PC-9 (cell line): ENCODE measurements at regions of chr3 and their contacts with region 1.

Region 1: DNA sequence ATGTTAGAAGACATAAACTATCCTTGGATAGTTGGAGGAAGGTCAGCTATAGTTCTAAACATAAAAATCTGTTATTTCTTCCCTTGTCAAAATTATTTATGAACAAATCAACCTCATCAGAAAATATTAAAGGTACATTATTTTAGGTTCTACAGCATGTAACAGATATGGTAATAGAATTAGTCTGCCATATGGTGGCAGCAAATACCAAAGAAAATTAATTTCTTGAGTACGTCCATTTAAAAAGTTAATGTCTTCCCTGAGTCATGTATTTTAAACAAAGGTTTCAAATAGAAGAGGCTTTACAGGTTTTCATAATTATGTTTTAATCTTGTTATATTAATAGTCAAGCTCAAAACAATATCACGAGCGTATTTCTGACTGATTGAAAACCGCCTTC is 17.9 kb upstream of the ANKRD28 start:
- DNase-seq: peak in 1 of 2 experiments; percentile 35
- H3K4me3 ChIP-seq: no peak overlapping the region
- H3K27ac ChIP-seq: no peak overlapping the region
- H3K4me1 ChIP-seq: no peaks in the 10 kb centered on the region
- H3K27me3 ChIP-seq: no peaks in the 10 kb centered on the region
- CTCF ChIP-seq: peak; percentile 68

Region 2: GRCh38 chr3:15108082-15108545 is 707.6 kb before region 1 on chr3:
- CTCF ChIA-PET with region 1: no interaction called
- POLR2A ChIA-PET with region 1: no interaction called
- intact Hi-C with region 1: loop called (anchors 10 kb)
- DNase-seq: peak in 1 of 2 experiments; percentile 62
- H3K4me3 ChIP-seq: no peak overlapping the region
- H3K27ac ChIP-seq: no peak overlapping the region
- H3K4me1 ChIP-seq: no peaks in the 10 kb centered on the region
- H3K27me3 ChIP-seq: peaks cover 11% of the 10 kb centered on the region; the same call in 1 of the 2 replicates
- CTCF ChIP-seq: peak; percentile 94

Region 3: GRCh38 chr3:15629860-15630597 is 185.7 kb before region 1 on chr3:
- CTCF ChIA-PET with region 1: interaction called, 3 read pairs
- POLR2A ChIA-PET with region 1: no interaction called
- intact Hi-C with region 1: loop called (anchors 1 kb)
- DNase-seq: peak; percentile 57 to 60
- H3K4me3 ChIP-seq: peak overlapping the region; percentile 15; the same call in 1 of the 2 replicates
- H3K27ac ChIP-seq: peak overlapping the region; percentile 79
- H3K4me1 ChIP-seq: peaks cover 54% of the 10 kb centered on the region
- H3K27me3 ChIP-seq: no peaks in the 10 kb centered on the region
- CTCF ChIP-seq: peak; percentile 79

Region 4: DNA sequence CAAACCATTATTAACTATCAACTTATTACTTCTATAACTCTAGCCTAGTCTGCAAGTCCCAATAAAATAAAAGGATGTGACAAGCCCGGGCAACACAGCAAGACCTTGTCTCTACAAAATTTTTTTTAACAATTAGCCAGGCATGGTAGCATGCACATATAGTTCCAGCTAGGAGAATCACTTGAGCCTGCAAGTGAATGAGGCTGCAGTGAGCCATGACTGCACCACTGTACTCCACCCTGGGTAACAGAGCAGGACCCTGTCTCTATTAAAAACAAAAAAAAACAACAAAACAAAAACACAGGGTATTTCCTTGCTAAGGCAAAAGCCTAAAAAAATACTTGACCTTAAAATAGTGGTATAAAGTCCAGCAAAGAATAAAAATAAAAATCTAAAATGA is 49.3 kb before region 1 on chr3:
- CTCF ChIA-PET with region 1: no interaction called
- POLR2A ChIA-PET with region 1: no interaction called
- intact Hi-C with region 1: no loop called
- DNase-seq: no peak
- H3K4me3 ChIP-seq: no peak overlapping the region
- H3K27ac ChIP-seq: no peak overlapping the region
- H3K4me1 ChIP-seq: peaks cover 25% of the 10 kb centered on the region
- H3K27me3 ChIP-seq: no peaks in the 10 kb centered on the region
- CTCF ChIP-seq: no peak

Region 5: GRCh38 chr3:15803913-15804312 is 11.8 kb before region 1 on chr3:
- CTCF ChIA-PET with region 1: interaction called, 11 read pairs
- POLR2A ChIA-PET with region 1: no interaction called
- intact Hi-C with region 1: no loop called
- DNase-seq: no peak
- H3K4me3 ChIP-seq: no peak overlapping the region
- H3K27ac ChIP-seq: no peak overlapping the region
- H3K4me1 ChIP-seq: peaks cover 24% of the 10 kb centered on the region
- H3K27me3 ChIP-seq: no peaks in the 10 kb centered on the region
- CTCF ChIP-seq: no peak

Region 6: GRCh38 chr3:15859507-15860013 is 43.9 kb after region 1 on chr3:
- CTCF ChIA-PET with region 1: no interaction called
- POLR2A ChIA-PET with region 1: no interaction called
- intact Hi-C with region 1: no loop called
- DNase-seq: peak; percentile 64 to 89
- H3K4me3 ChIP-seq: peak overlapping the region; percentile 96
- H3K27ac ChIP-seq: peak overlapping the region; percentile 73
- H3K4me1 ChIP-seq: peaks cover 29% of the 10 kb centered on the region
- H3K27me3 ChIP-seq: no peaks in the 10 kb centered on the region
- CTCF ChIP-seq: no peak

Region 7: DNA sequence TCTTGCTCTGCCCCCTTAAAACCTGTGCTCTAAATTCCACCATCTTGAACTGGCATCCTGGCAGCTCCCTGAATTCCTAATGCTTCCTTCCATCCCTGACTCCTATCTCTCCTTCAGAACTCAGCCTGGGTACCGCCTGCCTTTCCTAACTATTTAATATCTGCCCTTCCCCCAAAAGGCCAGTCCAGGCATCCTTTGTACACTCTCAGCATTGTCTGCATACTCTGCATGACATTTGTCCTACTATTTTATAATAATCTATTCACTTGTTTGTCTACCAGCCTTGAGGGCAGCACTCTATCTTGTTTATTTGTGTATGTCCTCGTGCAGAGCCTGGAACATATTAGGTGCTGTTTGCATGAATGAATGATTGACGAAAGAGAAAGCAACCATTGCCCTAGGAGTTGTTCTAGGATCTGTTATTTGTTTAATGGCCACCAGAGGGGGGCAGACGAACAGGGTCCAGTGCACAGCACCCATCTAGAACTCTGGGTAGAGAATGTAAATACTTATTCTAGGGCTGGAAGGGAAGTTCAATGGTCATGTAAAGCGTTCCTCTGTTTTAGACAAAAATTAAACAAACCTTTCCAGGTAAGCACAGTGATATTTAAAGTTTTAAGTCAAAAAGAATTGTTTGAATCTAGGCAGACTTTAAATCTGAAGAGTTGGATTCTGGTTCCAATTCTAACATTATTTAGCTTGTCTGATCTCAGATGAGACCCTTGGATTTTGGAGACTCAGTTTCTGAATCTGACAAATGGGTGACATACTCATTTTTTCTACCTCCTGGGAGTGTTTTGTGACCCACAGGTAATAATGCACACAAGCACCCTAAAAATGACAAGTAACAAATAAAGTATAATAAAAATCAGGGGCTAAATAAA is 233.0 kb after region 1 on chr3:
- CTCF ChIA-PET with region 1: interaction called, 4 read pairs
- POLR2A ChIA-PET with region 1: no interaction called
- intact Hi-C with region 1: loop called (anchors 5 kb)
- DNase-seq: peak; percentile 25 to 36
- H3K4me3 ChIP-seq: peak overlapping the region; percentile 30; the same call in 1 of the 2 replicates
- H3K27ac ChIP-seq: no peak overlapping the region
- H3K4me1 ChIP-seq: no peaks in the 10 kb centered on the region
- H3K27me3 ChIP-seq: no peaks in the 10 kb centered on the region
- CTCF ChIP-seq: peak; percentile 93

Region 8: GRCh38 chr3:16177962-16178627 is 362.4 kb after region 1 on chr3:
- CTCF ChIA-PET with region 1: no interaction called
- POLR2A ChIA-PET with region 1: no interaction called
- intact Hi-C with region 1: loop called (anchors 10 kb)
- DNase-seq: peak in 1 of 2 experiments; percentile 67
- H3K4me3 ChIP-seq: no peak overlapping the region
- H3K27ac ChIP-seq: no peak overlapping the region
- H3K4me1 ChIP-seq: no peaks in the 10 kb centered on the region
- H3K27me3 ChIP-seq: peaks cover 18% of the 10 kb centered on the region; the same call in 1 of the 2 replicates
- CTCF ChIP-seq: peak; percentile 95

Region 9: GRCh38 chr3:16550676-16551341 is 735.1 kb after region 1 on chr3:
- CTCF ChIA-PET with region 1: no interaction called
- POLR2A ChIA-PET with region 1: no interaction called
- intact Hi-C with region 1: loop called (anchors 10 kb)
- DNase-seq: peak; percentile 61 to 75
- H3K4me3 ChIP-seq: no peak overlapping the region
- H3K27ac ChIP-seq: no peak overlapping the region
- H3K4me1 ChIP-seq: no peaks in the 10 kb centered on the region
- H3K27me3 ChIP-seq: no peaks in the 10 kb centered on the region
- CTCF ChIP-seq: peak; percentile 89